ENCODE measurements at regions of chr2 and their contacts with region 1.

Region 1: GRCh38 chr2:10448208-10448645 is at the start of gene ODC1:
- DNase-seq: peak; percentile 98
- ATAC-seq: peak; percentile 80
- H3K4me3 ChIP-seq: peak within 1 kb of the TSS; percentile 58 to 87 (median 63)
- H3K4me3 Mint-ChIP-seq: peak within 1 kb of the TSS; percentile 91
- H3K27ac ChIP-seq: peak within 1 kb of the TSS; percentile 94 to 97
- H3K27ac Mint-ChIP-seq: peak within 1 kb of the TSS; percentile 85
- H3K4me1 ChIP-seq: peaks cover 44 to 55% of the 10 kb centered on the region in 2 donors
- H3K4me1 Mint-ChIP-seq: peaks cover 38% of the 10 kb centered on the region
- H3K27me3 ChIP-seq: no peaks in the 10 kb centered on the region
- H3K27me3 Mint-ChIP-seq: no peaks in the 10 kb centered on the region
- CTCF ChIP-seq: no peak
- total RNA-seq, gene ODC1: 88.7 and 92.1 TPM in 2 replicates

Region 2: DNA sequence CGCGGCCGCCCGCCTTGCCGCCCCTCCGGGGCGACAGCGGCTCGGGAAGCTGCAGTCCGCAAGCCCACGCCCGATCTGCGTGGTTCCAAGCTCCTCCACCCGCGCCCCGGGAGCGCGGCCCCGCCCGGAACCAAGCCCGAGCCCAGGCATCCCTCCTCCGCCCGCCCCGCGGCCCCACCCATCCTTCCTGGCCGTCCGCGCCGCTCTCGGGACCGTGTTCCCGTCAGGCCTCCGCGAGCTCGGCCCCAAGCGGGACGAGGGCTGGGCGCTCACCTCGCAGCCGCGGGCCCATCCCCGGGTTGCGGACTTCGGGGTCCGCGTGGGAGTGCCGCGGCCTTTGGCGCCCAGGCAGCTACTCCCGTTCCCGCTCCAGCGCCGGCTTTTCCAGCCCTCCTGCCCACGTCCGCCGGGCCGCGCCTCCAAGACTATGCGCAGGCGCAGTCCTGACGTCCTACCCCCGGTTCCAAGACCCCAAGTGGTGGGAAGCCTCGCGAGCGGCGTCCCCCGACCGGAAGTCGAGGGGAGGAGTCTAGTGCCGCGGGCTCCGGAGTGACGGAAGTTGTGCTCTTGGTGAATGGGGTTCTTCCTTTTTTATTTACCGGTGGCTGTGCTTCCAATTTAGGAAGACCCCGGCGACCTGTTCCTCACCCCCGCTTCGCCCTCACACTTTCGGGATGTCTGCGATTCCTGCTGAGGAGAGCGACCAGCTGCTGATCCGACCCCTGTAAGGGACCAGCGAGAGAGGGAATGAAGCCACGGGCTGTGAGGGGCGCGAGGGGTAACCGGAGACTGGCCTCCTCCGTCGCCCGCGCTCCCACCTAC is 1024.9 kb before region 1 on chr2 and contains the starts of genes CPSF3 and ITGB1BP1:
- CTCF ChIA-PET with region 1: no interaction called
- POLR2A ChIA-PET with region 1: no interaction called
- intact Hi-C with region 1: loop called (anchors 5 kb)
- DNase-seq: peak; percentile 98
- ATAC-seq: peak; percentile 85
- H3K4me3 ChIP-seq: peak within 1 kb of the TSS; percentile 67 to 98 (median 88)
- H3K4me3 Mint-ChIP-seq: no peak within 1 kb of the TSS
- H3K27ac ChIP-seq: peak within 1 kb of the TSS; percentile 69 to 84
- H3K27ac Mint-ChIP-seq: peak within 1 kb of the TSS; percentile 92
- H3K4me1 ChIP-seq: peaks cover 20 to 29% of the 10 kb centered on the region in 2 donors
- H3K4me1 Mint-ChIP-seq: peaks cover 29% of the 10 kb centered on the region
- H3K27me3 ChIP-seq: no peaks in the 10 kb centered on the region
- H3K27me3 Mint-ChIP-seq: no peaks in the 10 kb centered on the region
- CTCF ChIP-seq: no peak
- total RNA-seq, gene CPSF3: 28.0 and 28.4 TPM in 2 replicates
- total RNA-seq, gene ITGB1BP1: 42.8 and 47.1 TPM in 2 replicates

Region 3: DNA sequence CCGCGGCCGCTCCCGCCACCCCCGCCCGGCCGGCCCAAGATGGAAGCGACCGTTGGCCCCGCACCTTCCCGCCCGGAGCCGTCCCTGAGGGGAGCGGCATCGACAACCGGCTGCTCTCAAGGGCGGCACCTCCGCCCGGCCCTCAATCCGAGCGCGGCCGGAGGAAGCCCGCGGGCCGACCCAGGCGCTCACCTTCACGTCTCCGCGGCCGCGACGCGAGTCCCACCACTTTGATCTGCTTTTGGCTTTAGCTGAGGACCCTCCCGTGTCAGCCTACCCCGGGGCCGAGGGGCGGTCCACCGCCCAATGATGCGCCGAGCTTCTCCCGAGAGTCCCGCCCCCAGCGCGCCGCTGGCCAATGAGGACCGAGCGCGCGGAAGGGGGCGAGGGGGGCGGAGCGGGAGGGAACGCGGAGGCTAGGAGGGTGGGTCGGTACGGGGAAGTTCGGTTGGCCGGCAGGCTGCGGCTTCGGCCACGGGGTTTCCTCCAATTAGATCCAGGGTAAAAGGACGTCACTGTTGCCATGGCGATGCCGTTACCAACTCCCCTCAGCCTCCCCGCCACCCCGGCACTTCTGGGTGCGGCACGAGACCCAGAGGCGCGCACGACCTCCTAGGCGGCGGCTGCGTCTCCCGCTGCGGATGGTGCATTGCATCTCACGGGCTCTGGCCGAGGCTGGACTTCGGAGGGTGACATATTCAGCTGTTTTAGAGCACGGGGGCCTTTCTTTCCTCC is 817.3 kb before region 1 on chr2 and contains the start of gene YWHAQ:
- CTCF ChIA-PET with region 1: no interaction called
- POLR2A ChIA-PET with region 1: no interaction called
- intact Hi-C with region 1: loop called (anchors 2 kb)
- DNase-seq: peak; percentile 100
- ATAC-seq: peak; percentile 91
- H3K4me3 ChIP-seq: peak within 1 kb of the TSS; percentile 54 to 89 (median 69)
- H3K4me3 Mint-ChIP-seq: peak within 1 kb of the TSS; percentile 94
- H3K27ac ChIP-seq: peak within 1 kb of the TSS; percentile 76 to 92
- H3K27ac Mint-ChIP-seq: peak within 1 kb of the TSS; percentile 94
- H3K4me1 ChIP-seq: peaks cover 23 to 36% of the 10 kb centered on the region in 2 donors
- H3K4me1 Mint-ChIP-seq: peaks cover 46% of the 10 kb centered on the region
- H3K27me3 ChIP-seq: no peaks in the 10 kb centered on the region
- H3K27me3 Mint-ChIP-seq: no peaks in the 10 kb centered on the region
- CTCF ChIP-seq: no peak
- total RNA-seq, gene YWHAQ: 119 and 126 TPM in 2 replicates

Region 4: DNA sequence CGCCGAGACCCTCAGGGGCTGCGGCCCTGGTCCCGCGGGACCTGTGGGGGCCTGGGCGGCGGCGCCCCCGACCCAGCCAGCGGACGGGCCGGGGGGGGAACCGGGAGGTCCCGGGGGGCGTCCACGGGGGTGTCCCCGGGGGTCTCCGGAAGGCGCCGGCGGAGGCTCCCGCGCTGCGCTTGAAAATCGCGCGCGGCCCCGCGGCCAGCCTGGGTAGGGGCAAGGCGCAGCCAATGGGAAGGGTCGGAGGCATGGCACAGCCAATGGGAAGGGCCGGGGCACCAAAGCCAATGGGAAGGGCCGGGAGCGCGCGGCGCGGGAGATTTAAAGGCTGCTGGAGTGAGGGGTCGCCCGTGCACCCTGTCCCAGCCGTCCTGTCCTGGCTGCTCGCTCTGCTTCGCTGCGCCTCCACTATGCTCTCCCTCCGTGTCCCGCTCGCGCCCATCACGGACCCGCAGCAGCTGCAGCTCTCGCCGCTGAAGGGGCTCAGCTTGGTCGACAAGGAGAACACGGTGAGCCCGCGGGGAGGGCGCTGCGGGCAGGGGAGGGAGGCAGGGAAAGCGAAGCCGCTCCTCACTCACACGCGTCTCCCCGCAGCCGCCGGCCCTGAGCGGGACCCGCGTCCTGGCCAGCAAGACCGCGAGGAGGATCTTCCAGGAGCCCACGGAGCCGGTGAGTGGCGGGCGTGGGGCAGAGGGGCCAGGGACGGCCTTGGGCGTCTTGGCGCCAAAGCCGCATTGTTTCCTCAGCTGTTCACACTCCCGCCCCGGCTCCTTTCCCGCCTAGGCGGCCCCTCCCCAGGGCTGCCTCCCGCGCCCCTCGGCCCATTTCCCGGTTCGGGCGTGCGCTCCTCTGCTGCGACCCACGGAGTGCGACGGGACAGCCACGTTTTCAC is 325.6 kb before region 1 on chr2 and contains the start of gene RRM2:
- CTCF ChIA-PET with region 1: interaction called, 12 read pairs
- POLR2A ChIA-PET with region 1: no interaction called
- intact Hi-C with region 1: loop called (anchors 1 kb)
- DNase-seq: peak; percentile 91
- ATAC-seq: peak; percentile 82
- H3K4me3 ChIP-seq: peak within 1 kb of the TSS in 4 of 5 experiments; percentile 42 to 77 (median 54)
- H3K4me3 Mint-ChIP-seq: peak within 1 kb of the TSS; percentile 98
- H3K27ac ChIP-seq: no peak within 1 kb of the TSS
- H3K27ac Mint-ChIP-seq: peak within 1 kb of the TSS; percentile 59
- H3K4me1 ChIP-seq: peaks cover 29 to 32% of the 10 kb centered on the region in 2 donors
- H3K4me1 Mint-ChIP-seq: peaks cover 30% of the 10 kb centered on the region
- H3K27me3 ChIP-seq: peaks cover 0 to 17% (median 8%) of the 10 kb centered on the region in 4 experiments
- H3K27me3 Mint-ChIP-seq: peaks cover 10% of the 10 kb centered on the region
- CTCF ChIP-seq: no peak
- total RNA-seq, gene RRM2: 1.2 and 1.3 TPM in 2 replicates

Region 5: DNA sequence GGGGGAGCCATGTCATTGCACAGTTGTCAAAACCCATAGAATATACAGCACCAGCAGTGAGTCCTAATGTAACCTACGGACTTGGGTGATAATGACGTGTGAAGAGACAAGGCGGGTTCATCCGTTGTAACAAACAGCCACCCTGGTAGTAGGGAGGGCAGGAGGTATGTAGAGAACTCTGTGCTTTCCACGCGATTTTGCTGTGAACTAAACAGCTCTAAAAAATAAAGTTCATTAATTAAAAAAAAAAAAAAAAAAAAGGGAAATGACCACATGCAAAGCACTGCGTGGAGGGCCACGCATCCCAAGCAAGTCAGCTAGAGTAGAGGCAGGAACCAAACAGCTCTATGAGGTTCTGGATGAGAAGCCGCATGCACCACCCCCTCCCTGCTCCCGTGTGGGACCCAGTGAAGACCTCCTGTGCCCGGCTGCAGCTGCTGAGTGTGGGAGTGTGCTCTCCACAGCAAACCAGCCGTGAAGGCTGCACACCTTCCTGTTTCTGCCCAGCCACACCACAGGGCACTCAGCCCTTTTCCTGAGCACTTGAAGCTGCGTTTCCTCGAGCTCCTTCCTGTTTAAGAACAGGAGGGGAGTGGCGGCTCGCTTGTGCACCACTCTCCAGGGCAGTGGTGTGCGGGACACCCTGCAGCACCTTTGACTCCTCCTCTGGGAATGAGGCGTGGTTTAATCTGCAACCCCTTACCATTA is 65.7 kb before region 1 on chr2:
- CTCF ChIA-PET with region 1: interaction called, 5 read pairs
- POLR2A ChIA-PET with region 1: interaction called, 5 read pairs
- intact Hi-C with region 1: loop called (anchors 5 kb)
- DNase-seq: peak; percentile 82
- ATAC-seq: peak; percentile 69
- H3K4me3 ChIP-seq: peak overlapping the region; percentile 12 to 68 (median 49)
- H3K4me3 Mint-ChIP-seq: peak overlapping the region; percentile 64
- H3K27ac ChIP-seq: peak overlapping the region; percentile 68 to 76
- H3K27ac Mint-ChIP-seq: peak overlapping the region; percentile 81
- H3K4me1 ChIP-seq: peaks cover 67 to 96% of the 10 kb centered on the region in 2 donors
- H3K4me1 Mint-ChIP-seq: peaks cover 86% of the 10 kb centered on the region
- H3K27me3 ChIP-seq: no peaks in the 10 kb centered on the region
- H3K27me3 Mint-ChIP-seq: no peaks in the 10 kb centered on the region
- CTCF ChIP-seq: no peak

Region 6: GRCh38 chr2:10493636-10494281 is 45.5 kb after region 1 on chr2:
- CTCF ChIA-PET with region 1: interaction called, 3 read pairs
- POLR2A ChIA-PET with region 1: interaction called, 3 read pairs
- intact Hi-C with region 1: loop called (anchors 1 kb)
- DNase-seq: peak; percentile 78
- ATAC-seq: peak; percentile 94
- H3K4me3 ChIP-seq: no peak overlapping the region
- H3K4me3 Mint-ChIP-seq: peak overlapping the region; percentile 52
- H3K27ac ChIP-seq: no peak overlapping the region
- H3K27ac Mint-ChIP-seq: peak overlapping the region; percentile 83
- H3K4me1 ChIP-seq: peaks cover 7 to 18% of the 10 kb centered on the region in 2 donors
- H3K4me1 Mint-ChIP-seq: peaks cover 13% of the 10 kb centered on the region
- H3K27me3 ChIP-seq: peaks cover 0 to 11% (median 0%) of the 10 kb centered on the region in 4 experiments
- H3K27me3 Mint-ChIP-seq: peaks cover 21% of the 10 kb centered on the region
- CTCF ChIP-seq: no peak

Region 7: DNA sequence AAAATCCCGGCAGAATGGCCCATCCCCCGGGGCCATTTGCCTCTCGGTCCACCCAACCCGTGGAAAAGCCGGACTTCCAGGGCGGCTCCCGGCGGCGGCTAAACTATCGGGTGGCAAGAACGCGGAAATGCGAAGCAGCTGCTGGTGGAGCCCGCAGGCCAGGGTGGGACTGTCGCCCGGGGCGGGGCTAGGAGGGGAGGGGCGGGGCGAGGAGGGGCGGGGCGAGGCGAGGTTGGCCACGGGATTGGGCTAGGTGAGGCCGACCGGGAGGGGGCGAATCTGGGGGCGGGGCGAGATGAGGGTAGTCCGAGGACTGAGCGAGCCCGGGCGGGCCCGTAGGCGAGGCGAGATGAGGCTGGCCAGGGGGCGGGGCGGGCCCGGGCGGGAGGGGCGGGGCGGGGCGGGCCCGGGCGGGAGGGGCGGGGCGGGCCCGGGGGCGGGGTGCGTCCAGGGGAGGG is 706.7 kb after region 1 on chr2:
- CTCF ChIA-PET with region 1: no interaction called
- POLR2A ChIA-PET with region 1: no interaction called
- intact Hi-C with region 1: loop called (anchors 2 kb)
- DNase-seq: peak; percentile 96
- ATAC-seq: peak; percentile 89
- H3K4me3 ChIP-seq: peak overlapping the region; percentile 30 to 87 (median 81)
- H3K4me3 Mint-ChIP-seq: peak overlapping the region; percentile 88
- H3K27ac ChIP-seq: peak overlapping the region; percentile 89 to 93
- H3K27ac Mint-ChIP-seq: peak overlapping the region; percentile 93
- H3K4me1 ChIP-seq: peaks cover 15 to 20% of the 10 kb centered on the region in 2 donors
- H3K4me1 Mint-ChIP-seq: peaks cover 18% of the 10 kb centered on the region
- H3K27me3 ChIP-seq: peaks cover 0 to 5% (median 0%) of the 10 kb centered on the region in 4 experiments
- H3K27me3 Mint-ChIP-seq: no peaks in the 10 kb centered on the region
- CTCF ChIP-seq: no peak